Colonic mucosa (tissue), 4 donors: ENCODE measurements at regions of chr19 and their contacts with region 1.

Region 1: GRCh38 chr19:35495107-35496064 is 5.1 kb upstream of the KRTDAP start:
- DNase-seq: peak; percentile 42
- H3K4me3 ChIP-seq: no peak overlapping the region
- H3K27ac ChIP-seq: no peak overlapping the region
- H3K4me1 ChIP-seq: no peaks in the 10 kb centered on the region
- H3K27me3 ChIP-seq: no peaks in the 10 kb centered on the region
- CTCF ChIP-seq: peak; percentile 100

Region 2: DNA sequence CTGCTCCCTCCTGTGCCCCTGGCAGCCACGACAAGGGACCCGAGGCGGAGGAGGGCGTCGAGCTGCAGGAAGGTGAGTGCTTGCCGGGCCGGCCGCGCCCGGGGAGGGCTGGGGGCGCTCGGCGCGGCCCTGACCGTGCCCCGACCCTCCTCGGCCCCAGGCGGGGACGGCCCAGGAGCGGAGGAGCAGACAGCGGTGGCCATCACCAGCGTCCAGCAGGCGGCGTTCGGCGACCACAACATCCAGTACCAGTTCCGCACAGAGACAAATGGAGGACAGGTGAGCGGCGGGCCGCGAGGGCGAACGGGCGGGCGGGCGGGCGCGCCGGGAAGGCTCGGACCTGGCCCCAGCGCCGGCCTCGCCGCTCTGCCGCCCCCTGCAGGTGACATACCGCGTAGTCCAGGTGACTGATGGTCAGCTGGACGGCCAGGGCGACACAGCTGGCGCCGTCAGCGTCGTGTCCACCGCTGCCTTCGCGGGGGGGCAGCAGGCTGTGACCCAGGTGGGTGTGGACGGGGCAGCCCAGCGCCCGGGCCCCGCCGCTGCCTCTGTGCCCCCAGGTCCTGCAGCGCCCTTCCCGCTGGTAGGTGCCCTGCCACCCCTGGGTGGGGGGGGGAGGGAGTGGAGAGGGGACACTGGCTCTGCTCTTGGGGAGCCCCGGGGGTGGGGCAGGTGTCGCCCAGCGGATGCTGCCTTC is 225.8 kb before region 1 on chr19:
- intact Hi-C with region 1: loop called (anchors 10 kb)
- DNase-seq: peak; percentile 92
- H3K4me3 ChIP-seq: peak overlapping the region; percentile 57
- H3K27ac ChIP-seq: peak overlapping the region; percentile 84
- H3K4me1 ChIP-seq: peaks cover 5% of the 10 kb centered on the region
- H3K27me3 ChIP-seq: no peaks in the 10 kb centered on the region
- CTCF ChIP-seq: peak; percentile 92

Region 3: DNA sequence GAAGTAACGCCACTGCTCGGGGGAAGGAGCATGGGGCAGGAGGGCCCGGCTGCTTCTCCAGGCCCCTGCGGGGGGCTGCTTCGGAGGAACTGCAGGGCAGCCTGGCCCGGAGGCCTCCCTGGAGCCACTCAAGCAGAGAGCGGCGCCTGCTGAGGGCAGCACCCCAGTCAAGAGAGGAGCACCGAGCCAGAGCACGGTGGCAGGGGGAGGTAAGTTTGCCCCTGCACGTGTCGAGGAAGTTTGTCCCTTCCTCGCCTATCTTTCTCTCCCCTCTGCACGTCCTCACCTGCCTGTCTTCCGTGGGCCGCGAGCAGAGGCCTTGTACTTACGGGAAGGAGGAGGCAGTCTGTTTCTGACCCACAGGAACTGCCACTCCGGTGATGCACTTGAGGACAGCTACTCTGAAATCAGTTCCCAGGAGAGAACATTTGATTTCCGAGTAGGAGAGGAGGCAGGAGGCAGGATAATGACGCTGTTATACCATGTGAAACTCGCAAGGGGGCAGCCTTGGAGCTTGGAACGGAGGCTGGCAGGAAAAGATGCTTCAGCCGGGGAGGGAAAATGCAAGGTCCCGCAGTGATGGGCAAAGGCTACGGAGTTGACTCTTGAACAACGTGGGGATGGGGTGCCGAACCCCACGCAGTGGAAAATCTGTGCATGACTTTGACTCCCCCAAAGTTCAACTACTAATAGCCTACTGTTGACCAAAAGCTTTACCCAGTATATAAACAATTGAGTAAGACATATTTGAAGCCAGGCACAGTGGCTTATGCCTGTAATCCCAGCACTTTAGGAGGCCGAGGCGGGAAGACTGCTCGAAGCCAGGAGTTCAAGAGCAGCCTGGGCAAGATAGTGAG is 142.7 kb before region 1 on chr19:
- intact Hi-C with region 1: loop called (anchors 10 kb)
- DNase-seq: peak; percentile 74
- H3K4me3 ChIP-seq: no peak overlapping the region
- H3K27ac ChIP-seq: no peak overlapping the region
- H3K4me1 ChIP-seq: no peaks in the 10 kb centered on the region
- H3K27me3 ChIP-seq: no peaks in the 10 kb centered on the region
- CTCF ChIP-seq: peak; percentile 64